Calu3 (cell line): ENCODE measurements at regions of chr2 and their contacts with region 1.

Region 1: DNA sequence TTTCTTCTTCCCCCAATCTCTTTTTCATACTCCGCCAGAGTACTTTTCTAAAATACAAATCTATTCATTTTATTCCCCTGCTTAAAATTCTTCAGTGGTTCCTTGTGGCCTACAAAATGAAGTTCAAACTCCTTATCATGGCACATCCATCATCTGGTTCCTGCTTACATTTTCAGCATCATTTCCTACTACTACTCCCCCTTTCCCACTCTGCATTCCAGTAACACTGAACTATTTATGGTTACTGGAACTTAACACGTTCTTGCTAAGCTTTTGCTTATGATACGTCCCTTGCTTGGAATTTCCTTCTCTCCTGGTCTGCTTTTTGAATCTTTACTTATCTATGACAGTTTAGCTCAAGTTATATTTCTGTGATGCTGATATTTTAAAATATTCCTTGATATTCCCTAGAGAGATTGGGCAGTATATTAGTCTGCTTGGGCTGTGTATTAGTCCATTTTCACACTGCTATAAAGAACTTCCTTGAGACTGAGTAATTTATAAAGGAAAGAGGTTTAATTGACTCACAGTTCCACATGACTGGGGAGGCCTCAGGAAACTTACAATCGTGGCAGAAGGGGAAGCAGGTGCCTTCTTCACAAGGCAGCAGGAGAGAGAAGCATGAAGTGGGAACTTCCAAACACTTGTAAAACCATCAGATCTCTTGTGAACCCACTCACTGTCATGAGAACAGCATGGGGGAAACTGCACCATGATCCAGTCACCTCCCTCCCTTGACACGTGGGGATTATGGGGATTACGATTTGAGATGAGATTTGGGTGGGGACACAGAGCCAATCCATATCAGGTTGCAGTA is 53.2 kb downstream of the BMPR2 start:
- DNase-seq: no peak
- H3K4me3 Mint-ChIP-seq: no peak overlapping the region
- H3K27ac Mint-ChIP-seq: no peak overlapping the region
- H3K4me1 Mint-ChIP-seq: no peaks in the 10 kb centered on the region
- H3K27me3 Mint-ChIP-seq: no peaks in the 10 kb centered on the region
- CTCF ChIP-seq: no peak

Region 2: GRCh38 chr2:201685156-201685555 is 744.2 kb before region 1 on chr2:
- CTCF ChIA-PET with region 1: no interaction called
- intact Hi-C with region 1: no loop called
- DNase-seq: no peak
- H3K4me3 Mint-ChIP-seq: no peak overlapping the region
- H3K27ac Mint-ChIP-seq: no peak overlapping the region
- H3K4me1 Mint-ChIP-seq: no peaks in the 10 kb centered on the region
- H3K27me3 Mint-ChIP-seq: peaks cover 16% of the 10 kb centered on the region
- CTCF ChIP-seq: no peak

Region 3: DNA sequence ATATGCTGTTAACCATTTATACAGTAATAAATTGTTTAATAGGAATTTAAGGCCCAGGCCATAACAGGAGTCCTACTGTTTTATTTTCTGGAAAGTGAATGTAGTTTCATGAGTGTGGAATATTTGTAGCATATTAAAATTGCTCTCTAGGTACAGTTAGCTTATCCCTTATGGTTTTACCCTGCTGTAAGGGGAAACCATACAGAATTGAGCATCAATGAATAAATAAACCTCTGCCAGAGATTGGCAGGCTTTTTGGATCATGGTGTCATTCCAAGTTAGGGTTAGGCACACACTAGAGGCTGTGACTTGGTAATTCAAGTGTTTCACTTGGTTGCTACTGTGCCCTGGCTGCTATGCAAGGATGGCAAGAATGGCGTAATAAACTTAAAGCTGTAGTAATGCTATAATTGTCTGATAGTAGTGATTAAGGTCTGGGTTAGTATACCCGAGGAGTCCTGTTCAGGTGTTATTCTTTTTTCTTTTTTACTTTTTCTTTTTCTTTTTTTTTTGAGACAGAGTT is 22.9 kb before region 1 on chr2:
- CTCF ChIA-PET with region 1: interaction called, 11 read pairs
- intact Hi-C with region 1: no loop called
- DNase-seq: no peak
- H3K4me3 Mint-ChIP-seq: no peak overlapping the region
- H3K27ac Mint-ChIP-seq: no peak overlapping the region
- H3K4me1 Mint-ChIP-seq: peaks cover 7% of the 10 kb centered on the region
- H3K27me3 Mint-ChIP-seq: no peaks in the 10 kb centered on the region
- CTCF ChIP-seq: no peak